ENCODE measurements at regions of chr14 and their contacts with region 1.

Region 1: GRCh38 chr14:88179716-88180115 is 143.4 kb downstream of the KCNK10 start:
- ATAC-seq: no peak
- H3K4me3 ChIP-seq: no peak overlapping the region
- H3K27ac ChIP-seq: no peak overlapping the region
- H3K4me1 ChIP-seq: no peaks in the 10 kb centered on the region

Region 2: DNA sequence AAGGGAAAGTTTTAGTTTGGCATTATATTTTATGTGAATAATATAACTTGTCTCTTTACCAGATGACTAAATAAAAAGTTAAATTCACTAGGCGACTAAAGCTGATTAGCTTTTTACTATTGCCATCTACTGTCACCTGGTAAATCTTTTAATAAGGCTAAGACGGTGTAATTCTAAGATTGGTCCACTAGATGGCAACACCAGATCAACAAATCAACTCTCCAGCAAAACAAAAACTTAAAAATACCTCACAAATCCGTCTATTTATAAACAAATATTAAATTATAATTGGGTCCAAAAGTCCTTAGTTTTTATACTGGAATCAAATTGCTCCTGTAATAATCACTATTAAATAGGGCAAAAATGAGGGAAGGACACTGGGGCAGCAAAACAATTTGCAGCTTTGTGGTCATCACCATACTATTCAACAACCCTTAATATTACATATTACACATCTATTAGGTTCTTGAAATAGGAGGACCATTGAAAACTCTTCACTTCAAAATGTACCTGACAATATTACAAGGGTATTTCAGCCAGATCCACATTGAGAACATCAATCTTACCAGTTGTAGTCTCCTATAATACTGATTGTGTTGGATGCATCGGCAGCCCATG is 234.6 kb before region 1 on chr14:
- in situ Hi-C with region 1: loop called in 1 of 9 experiments (anchors 10 kb)
- ATAC-seq: no peak
- H3K4me3 ChIP-seq: no peak overlapping the region
- H3K27ac ChIP-seq: no peak overlapping the region
- H3K4me1 ChIP-seq: no peaks in the 10 kb centered on the region

Region 3: DNA sequence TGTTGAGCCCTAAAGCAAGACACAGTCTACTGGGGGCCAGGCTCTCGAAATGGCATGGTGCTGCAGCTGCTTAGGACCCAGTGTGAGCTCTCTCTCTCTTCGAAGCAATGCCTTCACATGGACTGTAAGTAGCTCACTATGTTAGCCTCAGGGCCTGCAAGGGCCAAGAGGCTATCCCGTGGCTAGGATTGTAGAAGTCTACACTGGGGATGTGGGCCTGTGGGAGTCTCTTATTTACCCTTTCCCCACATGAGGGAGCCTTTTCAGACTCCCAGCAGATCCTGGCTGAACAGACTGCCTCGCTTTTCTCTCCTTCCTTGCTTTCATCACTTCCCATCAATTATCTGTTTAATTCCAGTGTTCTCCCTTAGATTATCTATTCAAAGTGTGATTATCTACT is 73.3 kb before region 1 on chr14:
- in situ Hi-C with region 1: no loop called
- ATAC-seq: no peak
- H3K4me3 ChIP-seq: no peak overlapping the region
- H3K27ac ChIP-seq: no peak overlapping the region
- H3K4me1 ChIP-seq: no peaks in the 10 kb centered on the region